HCT116 (cell line): ENCODE measurements at regions of chr1 and their contacts with region 1.

Region 1: DNA sequence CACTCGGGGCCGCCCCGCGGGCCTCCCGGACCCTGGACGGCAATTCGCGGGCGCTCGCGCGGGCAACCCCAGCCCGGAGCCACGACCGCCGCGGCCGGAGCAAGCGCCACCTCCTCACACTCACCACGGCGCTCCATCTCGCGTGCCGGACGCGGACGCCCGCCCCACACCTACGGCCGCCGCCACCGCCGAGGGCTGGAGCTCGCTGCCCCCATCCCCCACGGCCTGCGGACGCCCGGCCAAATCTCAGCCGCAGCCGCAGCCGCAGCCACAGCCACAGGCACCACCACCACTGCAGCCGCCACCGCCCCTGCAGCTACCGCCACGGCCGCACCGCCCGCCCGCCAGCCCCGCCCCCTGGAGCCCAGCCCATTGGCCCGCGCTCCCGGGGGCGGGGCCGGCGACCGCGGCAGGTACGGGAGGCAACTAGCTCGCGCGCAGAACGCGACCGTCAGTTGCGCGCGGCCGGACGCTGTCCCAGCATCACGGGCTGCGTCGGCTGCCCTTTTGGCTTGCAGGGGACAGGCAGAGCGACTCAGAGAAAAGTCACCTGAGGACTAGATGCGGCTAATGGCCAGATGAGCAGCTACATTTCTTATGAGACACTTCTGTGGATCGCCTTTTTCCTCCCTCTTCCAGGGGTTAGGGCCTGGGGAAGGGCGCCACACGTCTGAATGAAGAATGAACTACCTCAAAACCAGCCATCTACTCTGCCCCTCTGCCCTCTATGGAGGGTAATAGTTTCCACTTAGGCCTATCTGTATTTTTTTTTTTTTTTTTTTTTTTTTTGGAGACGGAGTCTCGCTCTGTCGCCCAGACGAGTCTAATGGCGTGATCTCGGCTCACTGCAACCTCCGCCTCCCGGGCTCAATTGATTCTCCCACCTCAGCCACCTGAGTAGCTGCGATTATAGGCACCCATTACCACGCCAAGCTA is at the start of gene ARHGAP29:
- DNase-seq: peak; percentile 67
- ATAC-seq: peak; percentile 87
- H3K4me3 ChIP-seq: peak within 1 kb of the TSS; percentile 76 to 83
- H3K27ac ChIP-seq: peak within 1 kb of the TSS; percentile 94
- H3K4me1 ChIP-seq: peaks cover 54 to 83% of the 10 kb centered on the region in 2 experiments
- H3K27me3 ChIP-seq: no peaks in the 10 kb centered on the region
- CTCF ChIP-seq: no peak
- POLR2A ChIP-seq: peak; percentile 99
- RAD21 ChIP-seq: peak; percentile 26; the same call in 1 of the 2 replicates
- total RNA-seq, gene ARHGAP29: 128 TPM

Region 2: DNA sequence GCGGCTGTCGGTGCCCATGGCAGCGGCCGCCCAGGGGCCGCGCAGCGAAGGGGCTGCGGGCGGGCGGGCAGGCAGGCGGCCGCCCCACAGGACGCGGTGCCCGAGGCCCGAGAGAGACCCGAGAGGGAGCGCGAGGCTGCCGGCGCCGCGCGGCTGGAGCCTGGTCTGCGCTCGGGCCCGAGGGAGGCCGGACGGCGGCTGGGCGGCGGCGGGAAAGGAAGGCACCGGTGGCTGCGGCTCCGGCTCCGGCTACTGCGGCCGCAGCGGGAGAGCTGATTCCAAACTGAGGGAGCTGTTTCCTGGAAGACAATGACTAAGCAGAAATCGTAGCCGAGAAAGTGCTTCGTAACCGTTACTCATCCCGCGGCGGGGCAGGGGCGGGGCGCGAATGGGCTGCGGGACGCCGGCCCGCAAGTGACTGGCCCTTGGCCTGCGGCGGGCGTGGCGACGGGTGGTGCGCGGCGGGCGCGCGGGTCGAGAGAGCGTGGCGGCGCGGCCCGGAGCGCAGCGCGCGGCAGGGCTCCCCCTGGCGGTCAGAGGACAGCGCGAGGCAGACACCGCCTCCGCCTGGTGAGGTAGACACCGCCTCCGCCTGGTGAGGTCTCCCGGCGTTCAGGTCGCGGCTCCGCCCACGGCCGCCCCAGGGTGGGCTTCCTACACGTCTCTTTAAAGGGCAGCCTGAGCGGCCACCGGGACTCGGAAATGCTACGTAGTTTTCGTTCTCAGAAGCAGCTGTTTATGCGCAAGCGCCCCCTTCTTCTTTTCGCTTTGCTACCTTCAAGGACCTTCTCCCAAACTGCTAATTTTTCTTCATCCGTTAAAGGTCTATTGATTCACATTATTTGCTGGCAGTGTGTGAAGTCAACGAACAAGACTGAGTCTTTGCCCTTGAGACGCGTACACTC is 328.2 kb before region 1 on chr1 and contains the start of gene GCLM:
- CTCF ChIA-PET with region 1: no interaction called
- POLR2A ChIA-PET with region 1: no interaction called
- RAD21 ChIA-PET with region 1: no interaction called
- intact Hi-C with region 1: loop called (anchors 5 kb)
- DNase-seq: peak; percentile 81
- ATAC-seq: peak; percentile 94
- H3K4me3 ChIP-seq: peak within 1 kb of the TSS; percentile 71 to 82
- H3K27ac ChIP-seq: peak within 1 kb of the TSS; percentile 88
- H3K4me1 ChIP-seq: peaks cover 7 to 34% of the 10 kb centered on the region in 2 experiments; a peak in 3 of 4 replicates
- H3K27me3 ChIP-seq: no peaks in the 10 kb centered on the region
- CTCF ChIP-seq: peak; percentile 75 to 96 (median 80)
- POLR2A ChIP-seq: no peak
- RAD21 ChIP-seq: peak; percentile 36; the same call in 1 of the 2 replicates
- total RNA-seq, gene GCLM: 28.9 TPM

Region 3: GRCh38 chr1:94061513-94062443 is 175.8 kb before region 1 on chr1:
- CTCF ChIA-PET with region 1: interaction called, 9 read pairs
- POLR2A ChIA-PET with region 1: interaction called, 10 read pairs
- RAD21 ChIA-PET with region 1: interaction called, 3 read pairs
- intact Hi-C with region 1: loop called (anchors 1 kb)
- DNase-seq: peak; percentile 67
- ATAC-seq: peak; percentile 94
- H3K4me3 ChIP-seq: no peak overlapping the region
- H3K27ac ChIP-seq: no peak overlapping the region
- H3K4me1 ChIP-seq: peaks cover 18 to 36% of the 10 kb centered on the region in 2 experiments
- H3K27me3 ChIP-seq: no peaks in the 10 kb centered on the region
- CTCF ChIP-seq: peak; percentile 90 to 96 (median 92)
- POLR2A ChIP-seq: no peak
- RAD21 ChIP-seq: peak; percentile 99

Region 4: DNA sequence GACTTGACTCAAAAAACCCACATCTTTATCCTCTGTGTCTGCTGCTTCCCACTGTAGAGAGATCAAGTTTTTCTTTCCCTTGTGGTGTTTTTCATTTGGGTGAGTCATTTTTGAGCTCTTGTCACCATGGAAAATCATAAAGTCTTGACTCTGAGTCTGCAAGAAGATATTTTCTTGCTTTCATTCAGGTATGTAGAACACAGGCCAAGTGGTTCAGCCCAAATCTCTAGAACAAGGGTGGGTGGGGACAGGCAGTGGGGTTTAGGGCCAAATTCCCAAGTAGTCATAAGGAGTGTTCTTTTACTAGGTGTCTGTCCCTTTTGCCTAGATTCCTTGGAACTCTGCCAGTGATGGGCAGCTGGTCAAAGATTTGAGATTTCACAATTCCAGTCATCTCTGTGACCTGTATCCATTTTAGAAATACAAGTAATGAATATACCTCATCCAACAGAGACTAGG is 21.3 kb after region 1 on chr1:
- CTCF ChIA-PET with region 1: no interaction called
- POLR2A ChIA-PET with region 1: interaction called, 11 read pairs
- RAD21 ChIA-PET with region 1: no interaction called
- intact Hi-C with region 1: no loop called
- DNase-seq: peak; percentile 71
- ATAC-seq: peak; percentile 75
- H3K4me3 ChIP-seq: no peak overlapping the region
- H3K27ac ChIP-seq: peak overlapping the region; percentile 49; the same call in 1 of the 2 replicates
- H3K4me1 ChIP-seq: peaks cover 22 to 59% of the 10 kb centered on the region in 2 experiments
- H3K27me3 ChIP-seq: no peaks in the 10 kb centered on the region
- CTCF ChIP-seq: no peak
- POLR2A ChIP-seq: no peak
- RAD21 ChIP-seq: no peak

Region 5: GRCh38 chr1:94299627-94300552 is 62.3 kb after region 1 on chr1:
- CTCF ChIA-PET with region 1: interaction called, 3 read pairs
- POLR2A ChIA-PET with region 1: interaction called, 37 read pairs
- RAD21 ChIA-PET with region 1: no interaction called
- intact Hi-C with region 1: no loop called
- DNase-seq: peak; percentile 98
- ATAC-seq: peak; percentile 87
- H3K4me3 ChIP-seq: peak overlapping the region in 1 of 2 experiments; percentile 21; a peak in 2 of 4 replicates
- H3K27ac ChIP-seq: peak overlapping the region; percentile 94
- H3K4me1 ChIP-seq: peaks cover 40 to 93% of the 10 kb centered on the region in 2 experiments
- H3K27me3 ChIP-seq: no peaks in the 10 kb centered on the region
- CTCF ChIP-seq: no peak
- POLR2A ChIP-seq: no peak
- RAD21 ChIP-seq: peak; percentile 49

Region 6: GRCh38 chr1:94329986-94330385 is 92.4 kb after region 1 on chr1:
- CTCF ChIA-PET with region 1: interaction called, 10 read pairs
- POLR2A ChIA-PET with region 1: interaction called, 54 read pairs
- RAD21 ChIA-PET with region 1: interaction called, 4 to 6 read pairs
- intact Hi-C with region 1: loop called (anchors 1 kb)
- DNase-seq: no peak
- ATAC-seq: peak; percentile 21
- H3K4me3 ChIP-seq: peak overlapping the region in 1 of 2 experiments; percentile 5; a peak in 1 of 4 replicates
- H3K27ac ChIP-seq: peak overlapping the region; percentile 90
- H3K4me1 ChIP-seq: peaks cover 65 to 89% of the 10 kb centered on the region in 2 experiments
- H3K27me3 ChIP-seq: no peaks in the 10 kb centered on the region
- CTCF ChIP-seq: peak; percentile 58 to 87 (median 63)
- POLR2A ChIP-seq: no peak
- RAD21 ChIP-seq: peak; percentile 97